ENCODE measurements at regions of chr3 and their contacts with region 1.

Region 1: DNA sequence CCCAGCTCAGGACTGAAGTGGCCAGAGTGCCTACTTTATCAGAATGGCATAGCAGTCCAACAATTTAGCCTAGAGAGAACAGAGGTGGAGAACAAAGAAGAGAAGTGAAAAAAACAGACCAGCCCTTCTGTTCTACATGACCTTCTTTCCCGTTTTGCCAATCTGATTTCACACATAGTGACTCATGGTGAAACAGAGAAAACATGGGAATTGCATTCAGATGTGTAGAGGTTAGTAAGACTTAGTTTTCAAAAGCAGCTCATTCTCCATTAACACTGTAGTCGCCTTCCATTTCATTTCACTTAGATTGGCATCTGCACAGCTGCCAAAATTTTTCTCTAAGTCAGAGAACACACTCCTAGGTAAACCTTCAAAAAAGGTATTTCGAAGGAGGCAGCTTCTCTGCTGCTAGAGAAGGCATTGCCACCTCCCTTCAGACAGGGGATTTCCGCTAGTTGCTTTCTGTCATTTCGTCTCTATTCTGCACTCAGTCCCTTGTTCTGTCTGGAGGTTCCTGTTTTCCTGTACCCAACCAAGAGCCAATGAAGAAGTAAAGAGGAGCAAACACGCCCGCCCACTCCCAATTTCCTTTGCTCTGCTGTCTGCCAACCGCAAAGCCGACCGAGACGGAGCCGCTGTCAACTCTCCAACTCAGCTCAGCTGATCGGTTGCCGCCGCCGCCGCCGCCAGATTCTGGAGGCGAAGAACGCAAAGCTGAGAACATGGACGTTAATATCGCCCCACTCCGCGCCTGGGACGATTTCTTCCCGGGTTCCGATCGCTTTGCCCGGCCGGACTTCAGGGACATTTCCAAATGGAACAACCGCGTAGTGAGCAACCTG is at the start of gene ARL6IP5:
- DNase-seq: peak; percentile 81 to 96
- ATAC-seq: peak; percentile 45 to 77 (median 59)
- H3K4me3 ChIP-seq: peak within 1 kb of the TSS; percentile 92
- H3K4me3 Mint-ChIP-seq: peak within 1 kb of the TSS; percentile 96
- H3K27ac ChIP-seq: peak within 1 kb of the TSS; percentile 78
- H3K27ac Mint-ChIP-seq: peak within 1 kb of the TSS; percentile 90 to 98
- H3K4me1 ChIP-seq: peaks cover 49% of the 10 kb centered on the region
- H3K4me1 Mint-ChIP-seq: peaks cover 60% of the 10 kb centered on the region in 2 donors
- H3K27me3 ChIP-seq: no peaks in the 10 kb centered on the region
- H3K27me3 Mint-ChIP-seq: no peaks in the 10 kb centered on the region
- CTCF ChIP-seq: no peak
- total RNA-seq, gene ARL6IP5: 98.1 to 132 (median 105) TPM

Region 2: DNA sequence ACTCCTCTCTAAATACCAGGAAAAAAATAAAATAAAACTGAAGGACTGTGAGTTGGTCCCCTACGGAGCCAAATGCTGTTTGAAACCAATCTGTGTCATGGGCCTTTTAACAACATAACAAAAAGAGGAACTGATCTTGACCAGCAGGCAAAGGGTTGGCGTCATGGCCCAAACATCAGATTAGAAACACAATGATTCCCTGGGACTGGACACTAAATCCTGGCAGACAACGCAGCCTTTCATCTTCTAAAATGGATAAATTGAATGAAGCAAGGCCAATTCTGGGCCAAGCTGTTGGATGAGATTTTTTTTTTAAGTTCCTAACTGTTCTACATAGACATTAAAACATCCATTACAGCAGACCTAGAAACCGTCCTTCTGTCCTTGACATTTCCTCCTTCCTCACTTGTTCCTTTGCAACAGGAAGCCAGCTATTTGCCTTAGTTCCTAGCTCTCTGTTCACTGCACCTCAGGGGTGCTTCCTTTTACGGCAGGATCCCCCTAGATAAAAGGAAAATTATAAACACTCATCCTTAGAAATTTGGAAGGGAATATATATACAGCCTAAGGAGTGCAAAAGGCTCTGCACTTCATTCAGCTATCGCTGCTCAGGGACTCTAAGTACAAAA is 130.6 kb before region 1 on chr3:
- intact Hi-C with region 1: no loop called
- DNase-seq: no peak
- ATAC-seq: no peak
- H3K4me3 ChIP-seq: no peak overlapping the region
- H3K4me3 Mint-ChIP-seq: no peak overlapping the region
- H3K27ac ChIP-seq: no peak overlapping the region
- H3K27ac Mint-ChIP-seq: no peak overlapping the region
- H3K4me1 ChIP-seq: no peaks in the 10 kb centered on the region
- H3K4me1 Mint-ChIP-seq: no peaks in the 10 kb centered on the region
- H3K27me3 ChIP-seq: no peaks in the 10 kb centered on the region
- H3K27me3 Mint-ChIP-seq: peaks cover 14 to 48% of the 10 kb centered on the region in 2 donors
- CTCF ChIP-seq: no peak

Region 3: GRCh38 chr3:69051756-69052471 is 32.6 kb before region 1 on chr3 and contains the start of gene TMF1:
- intact Hi-C with region 1: loop called (anchors 1 kb)
- DNase-seq: peak; percentile 95 to 100
- ATAC-seq: peak; percentile 89 to 95 (median 93)
- H3K4me3 ChIP-seq: peak within 1 kb of the TSS; percentile 84
- H3K4me3 Mint-ChIP-seq: peak within 1 kb of the TSS; percentile 96
- H3K27ac ChIP-seq: peak within 1 kb of the TSS; percentile 93
- H3K27ac Mint-ChIP-seq: peak within 1 kb of the TSS; percentile 99
- H3K4me1 ChIP-seq: peaks cover 16% of the 10 kb centered on the region
- H3K4me1 Mint-ChIP-seq: peaks cover 42 to 52% of the 10 kb centered on the region in 2 donors
- H3K27me3 ChIP-seq: no peaks in the 10 kb centered on the region
- H3K27me3 Mint-ChIP-seq: no peaks in the 10 kb centered on the region
- CTCF ChIP-seq: no peak
- total RNA-seq, gene TMF1: 76.9 to 110 (median 85.5) TPM

Region 4: GRCh38 chr3:70298385-70298784 is 1213.8 kb after region 1 on chr3:
- intact Hi-C with region 1: no loop called
- DNase-seq: no peak
- ATAC-seq: no peak
- H3K4me3 ChIP-seq: no peak overlapping the region
- H3K4me3 Mint-ChIP-seq: no peak overlapping the region
- H3K27ac ChIP-seq: no peak overlapping the region
- H3K27ac Mint-ChIP-seq: no peak overlapping the region
- H3K4me1 ChIP-seq: no peaks in the 10 kb centered on the region
- H3K4me1 Mint-ChIP-seq: no peaks in the 10 kb centered on the region
- H3K27me3 ChIP-seq: no peaks in the 10 kb centered on the region
- H3K27me3 Mint-ChIP-seq: no peaks in the 10 kb centered on the region
- CTCF ChIP-seq: no peak